SK-N-SH (cell line): ENCODE measurements at regions of chr17 and their contacts with region 1.

Region 1: GRCh38 chr17:38351412-38352222 is at the start of gene SOCS7:
- DNase-seq: peak; percentile 96
- H3K4me3 ChIP-seq: peak within 1 kb of the TSS; percentile 68 to 77
- H3K27ac ChIP-seq: peak within 1 kb of the TSS; percentile 58 to 70
- H3K4me1 ChIP-seq: peaks cover 7 to 15% of the 10 kb centered on the region in 2 experiments; a peak in 1 of 4 replicates
- H3K27me3 ChIP-seq: no peaks in the 10 kb centered on the region
- CTCF ChIP-seq: no peak
- EP300 ChIP-seq: no peak; a peak in 1 of 4 replicates
- RAD21 ChIP-seq: no peak
- polyA plus RNA-seq, gene SOCS7: 7.4 and 10.0 TPM in 2 replicates

Region 2: GRCh38 chr17:38322091-38322779 is 29.4 kb before region 1 on chr17:
- CTCF ChIA-PET with region 1: interaction called, 303 read pairs
- POLR2A ChIA-PET with region 1: no interaction called
- DNase-seq: peak; percentile 85
- H3K4me3 ChIP-seq: no peak overlapping the region
- H3K27ac ChIP-seq: no peak overlapping the region
- H3K4me1 ChIP-seq: peaks cover 0 to 30% of the 10 kb centered on the region in 2 experiments; a peak in 2 of 4 replicates
- H3K27me3 ChIP-seq: no peaks in the 10 kb centered on the region
- CTCF ChIP-seq: peak; percentile 60
- EP300 ChIP-seq: no peak
- RAD21 ChIP-seq: peak; percentile 22; the same call in 1 of the 2 replicates

Region 3: GRCh38 chr17:38379438-38379837 is 27.8 kb after region 1 on chr17:
- CTCF ChIA-PET with region 1: interaction called, 19 read pairs
- POLR2A ChIA-PET with region 1: interaction called, 4 read pairs
- DNase-seq: no peak
- H3K4me3 ChIP-seq: no peak overlapping the region
- H3K27ac ChIP-seq: no peak overlapping the region
- H3K4me1 ChIP-seq: no peaks in the 10 kb centered on the region
- H3K27me3 ChIP-seq: no peaks in the 10 kb centered on the region
- CTCF ChIP-seq: no peak
- EP300 ChIP-seq: no peak
- RAD21 ChIP-seq: no peak

Region 4: GRCh38 chr17:38403491-38403890 is 51.9 kb after region 1 on chr17:
- CTCF ChIA-PET with region 1: interaction called, 423 read pairs
- POLR2A ChIA-PET with region 1: interaction called, 5 read pairs
- DNase-seq: peak; percentile 58
- H3K4me3 ChIP-seq: no peak overlapping the region
- H3K27ac ChIP-seq: peak overlapping the region in 1 of 2 experiments; percentile 0; a peak in 1 of 4 replicates
- H3K4me1 ChIP-seq: peaks cover 0 to 47% of the 10 kb centered on the region in 2 experiments; a peak in 2 of 4 replicates
- H3K27me3 ChIP-seq: no peaks in the 10 kb centered on the region
- CTCF ChIP-seq: no peak
- EP300 ChIP-seq: no peak
- RAD21 ChIP-seq: no peak

Region 5: GRCh38 chr17:38415250-38416194 is 63.9 kb after region 1 on chr17:
- CTCF ChIA-PET with region 1: interaction called, 423 read pairs
- POLR2A ChIA-PET with region 1: interaction called, 15 read pairs
- DNase-seq: no peak
- H3K4me3 ChIP-seq: no peak overlapping the region
- H3K27ac ChIP-seq: peak overlapping the region in 1 of 2 experiments; percentile 58; a peak in 2 of 4 replicates
- H3K4me1 ChIP-seq: peaks cover 5 to 50% of the 10 kb centered on the region in 2 experiments; a peak in 3 of 4 replicates
- H3K27me3 ChIP-seq: no peaks in the 10 kb centered on the region
- CTCF ChIP-seq: no peak
- EP300 ChIP-seq: no peak
- RAD21 ChIP-seq: no peak

Region 6: GRCh38 chr17:38428112-38428642 is 76.6 kb after region 1 on chr17 and contains the start of gene ARHGAP23:
- CTCF ChIA-PET with region 1: interaction called, 423 read pairs
- POLR2A ChIA-PET with region 1: no interaction called
- DNase-seq: peak; percentile 96
- H3K4me3 ChIP-seq: peak within 1 kb of the TSS; percentile 70 to 81
- H3K27ac ChIP-seq: peak within 1 kb of the TSS; percentile 48 to 85
- H3K4me1 ChIP-seq: peaks cover 10 to 25% of the 10 kb centered on the region in 2 experiments; a peak in 2 of 4 replicates
- H3K27me3 ChIP-seq: no peaks in the 10 kb centered on the region
- CTCF ChIP-seq: no peak
- EP300 ChIP-seq: no peak
- RAD21 ChIP-seq: no peak
- polyA plus RNA-seq, gene ARHGAP23: 10.6 and 19.2 TPM in 2 replicates

Region 7: DNA sequence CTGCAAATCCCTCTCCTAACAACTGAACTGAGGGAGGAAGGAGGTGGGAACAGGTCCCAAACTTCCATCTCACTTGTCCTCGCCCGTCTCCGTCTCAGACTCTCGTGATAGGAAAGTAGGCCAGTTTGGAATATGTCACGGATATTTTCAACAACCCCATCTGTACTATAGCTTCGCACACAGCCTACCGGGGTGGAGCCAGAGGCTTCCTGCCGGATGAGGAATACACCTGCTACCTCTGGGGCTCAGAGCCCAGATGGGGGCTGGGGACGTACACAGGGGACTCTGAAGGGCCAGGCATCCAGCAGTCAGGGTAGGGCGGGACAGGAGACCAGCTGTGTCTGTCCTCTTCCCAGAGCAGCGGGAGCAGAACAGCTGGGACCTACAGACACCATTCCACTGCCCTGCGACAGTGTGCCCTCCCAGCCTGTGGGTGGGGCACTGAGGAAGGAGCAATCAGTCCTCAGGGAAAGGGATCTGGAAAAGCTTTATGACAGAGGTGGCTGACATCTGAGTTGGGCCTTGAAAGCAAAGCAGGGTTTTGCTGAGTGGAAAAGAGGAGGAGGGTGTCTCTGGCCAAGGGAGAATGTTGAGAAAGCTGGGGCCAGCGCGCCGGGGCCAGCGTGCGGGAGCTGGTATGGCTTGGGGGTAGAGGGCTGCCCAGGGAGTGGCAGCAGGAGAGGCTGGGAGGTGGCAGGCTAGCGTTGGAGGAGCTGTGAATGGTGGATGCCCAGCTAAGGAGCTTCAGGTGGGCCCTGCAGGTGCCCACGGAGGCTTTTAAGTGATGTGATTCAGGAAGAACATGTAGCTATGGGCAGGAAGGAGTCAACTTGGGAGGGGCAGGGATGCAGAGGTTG is 265.6 kb after region 1 on chr17:
- CTCF ChIA-PET with region 1: no interaction called
- POLR2A ChIA-PET with region 1: no interaction called
- DNase-seq: no peak
- H3K4me3 ChIP-seq: no peak overlapping the region
- H3K27ac ChIP-seq: no peak overlapping the region
- H3K4me1 ChIP-seq: no peaks in the 10 kb centered on the region; a peak in 1 of 4 replicates
- H3K27me3 ChIP-seq: peaks cover 10% of the 10 kb centered on the region; the same call in 1 of the 2 replicates
- CTCF ChIP-seq: no peak
- EP300 ChIP-seq: no peak
- RAD21 ChIP-seq: no peak